ENCODE measurements at regions of chr7 and their contacts with region 1.

Region 1: GRCh38 chr7:2417981-2418481 is 14.6 kb downstream of the CHST12 start:
- DNase-seq: no peak
- H3K4me3 ChIP-seq: no peak overlapping the region
- H3K27ac ChIP-seq: no peak overlapping the region
- H3K4me1 ChIP-seq: peaks cover 0 to 5% (median 2%) of the 10 kb centered on the region in 4 donors
- H3K27me3 ChIP-seq: no peaks in the 10 kb centered on the region
- CTCF ChIP-seq: no peak
- EP300 ChIP-seq: no peak
- POLR2A ChIP-seq: no peak

Region 2: GRCh38 chr7:2393706-2394105 is 24.3 kb before region 1 on chr7:
- in situ Hi-C with region 1: no loop called
- intact Hi-C with region 1: loop called (anchors 1 kb)
- DNase-seq: no peak
- H3K4me3 ChIP-seq: no peak overlapping the region
- H3K27ac ChIP-seq: no peak overlapping the region
- H3K4me1 ChIP-seq: no peaks in the 10 kb centered on the region
- H3K27me3 ChIP-seq: no peaks in the 10 kb centered on the region
- CTCF ChIP-seq: no peak
- EP300 ChIP-seq: no peak
- POLR2A ChIP-seq: no peak

Region 3: GRCh38 chr7:3552499-3552898 is 1134.5 kb after region 1 on chr7:
- in situ Hi-C with region 1: no loop called
- intact Hi-C with region 1: loop called (anchors 5 kb)
- DNase-seq: no peak
- H3K4me3 ChIP-seq: no peak overlapping the region
- H3K27ac ChIP-seq: no peak overlapping the region
- H3K4me1 ChIP-seq: no peaks in the 10 kb centered on the region
- H3K27me3 ChIP-seq: no peaks in the 10 kb centered on the region
- CTCF ChIP-seq: no peak
- EP300 ChIP-seq: no peak
- POLR2A ChIP-seq: no peak

Measured in transverse colon (tissue), 4 donors.